PC-9 (cell line): ENCODE measurements at regions of chr1 and their contacts with region 1.

Region 1: GRCh38 chr1:43348809-43349583 is 9.8 kb upstream of the CDC20 start:
- DNase-seq: peak; percentile 85 to 99
- H3K4me3 ChIP-seq: peak overlapping the region; percentile 66
- H3K27ac ChIP-seq: peak overlapping the region; percentile 94
- H3K4me1 ChIP-seq: peaks cover 48% of the 10 kb centered on the region
- H3K27me3 ChIP-seq: no peaks in the 10 kb centered on the region
- CTCF ChIP-seq: no peak

Region 2: DNA sequence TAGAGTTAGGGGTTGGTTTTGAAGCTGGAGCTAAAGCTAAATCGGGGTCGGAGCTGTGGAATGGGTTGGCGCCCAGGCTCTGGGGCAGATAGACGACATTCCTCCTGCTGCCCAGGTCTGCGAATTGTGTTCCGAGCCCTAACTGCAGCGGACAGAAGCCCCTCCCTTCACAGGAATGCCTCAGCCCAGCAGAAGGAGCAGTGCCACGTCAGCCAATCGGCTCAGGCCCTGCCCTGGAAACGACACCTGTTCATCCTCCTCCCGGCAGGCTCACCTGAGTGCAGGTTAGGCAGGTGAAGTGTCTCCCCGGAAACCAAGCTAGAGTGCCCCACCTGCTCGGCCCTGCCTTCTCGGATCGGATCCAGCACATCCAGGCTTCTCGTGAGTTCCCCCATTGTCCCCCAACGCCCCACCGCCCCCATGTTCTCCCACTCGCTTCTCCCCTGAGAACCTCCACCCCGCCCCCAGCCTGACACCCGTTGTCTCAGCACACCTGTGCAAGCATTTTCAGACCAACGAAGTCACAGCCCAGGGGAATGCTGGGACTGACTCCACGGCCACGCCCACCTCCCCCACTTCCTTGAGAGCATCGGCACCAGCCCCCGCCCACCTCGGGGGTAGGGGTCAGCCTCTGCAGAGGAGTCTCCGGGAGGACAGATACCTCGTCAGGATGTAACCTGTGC is 78.4 kb before region 1 on chr1:
- CTCF ChIA-PET with region 1: no interaction called
- POLR2A ChIA-PET with region 1: interaction called, 5 read pairs
- intact Hi-C with region 1: loop called (anchors 2 kb)
- DNase-seq: peak; percentile 94 to 96
- H3K4me3 ChIP-seq: peak overlapping the region; percentile 59
- H3K27ac ChIP-seq: peak overlapping the region; percentile 81
- H3K4me1 ChIP-seq: peaks cover 25% of the 10 kb centered on the region
- H3K27me3 ChIP-seq: no peaks in the 10 kb centered on the region
- CTCF ChIP-seq: no peak

Region 3: GRCh38 chr1:43802356-43802980 is 453.5 kb after region 1 on chr1:
- CTCF ChIA-PET with region 1: no interaction called
- POLR2A ChIA-PET with region 1: interaction called, 12 read pairs
- intact Hi-C with region 1: no loop called
- DNase-seq: no peak
- H3K4me3 ChIP-seq: no peak overlapping the region
- H3K27ac ChIP-seq: no peak overlapping the region
- H3K4me1 ChIP-seq: no peaks in the 10 kb centered on the region
- H3K27me3 ChIP-seq: no peaks in the 10 kb centered on the region
- CTCF ChIP-seq: no peak